ENCODE measurements at regions of chr11 and their contacts with region 1.

Region 1: GRCh38 chr11:16945671-16946469 is 68.3 kb downstream of the PLEKHA7 start:
- DNase-seq: peak; percentile 52 to 70 (median 62)
- ATAC-seq: peak; percentile 97
- H3K4me3 ChIP-seq: no peak overlapping the region
- H3K27ac ChIP-seq: no peak overlapping the region
- H3K4me1 ChIP-seq: no peaks in the 10 kb centered on the region
- H3K27me3 ChIP-seq: peaks cover 0 to 7% of the 10 kb centered on the region in 2 experiments; a peak in 2 of 5 replicates
- CTCF ChIP-seq: peak; percentile 76 to 85 (median 82)
- EP300 ChIP-seq: no peak
- POLR2A ChIP-seq: no peak
- RAD21 ChIP-seq: peak; percentile 89 to 93

Region 2: GRCh38 chr11:16881074-16881709 is 64.7 kb before region 1 on chr11:
- CTCF ChIA-PET with region 1: no interaction called
- POLR2A ChIA-PET with region 1: no interaction called
- in situ Hi-C with region 1: no loop called
- intact Hi-C with region 1: no loop called
- DNase-seq: peak; percentile 35 to 68 (median 56)
- ATAC-seq: peak; percentile 92
- H3K4me3 ChIP-seq: no peak overlapping the region
- H3K27ac ChIP-seq: no peak overlapping the region
- H3K4me1 ChIP-seq: peaks cover 0 to 6% of the 10 kb centered on the region in 2 experiments; a peak in 2 of 5 replicates
- H3K27me3 ChIP-seq: peaks cover 17 to 30% of the 10 kb centered on the region in 2 experiments
- CTCF ChIP-seq: peak; percentile 55 to 65 (median 60)
- EP300 ChIP-seq: no peak
- POLR2A ChIP-seq: no peak
- RAD21 ChIP-seq: peak; percentile 29 to 74; a peak in 3 of 4 replicates

Region 3: GRCh38 chr11:17063171-17064002 is 117.5 kb after region 1 on chr11:
- CTCF ChIA-PET with region 1: interaction called, 5 read pairs
- POLR2A ChIA-PET with region 1: interaction called, 4 read pairs
- in situ Hi-C with region 1: loop called (anchors 5 kb)
- intact Hi-C with region 1: loop called (anchors 1 kb)
- DNase-seq: peak; percentile 58 to 64 (median 60)
- ATAC-seq: peak; percentile 97
- H3K4me3 ChIP-seq: no peak overlapping the region
- H3K27ac ChIP-seq: no peak overlapping the region
- H3K4me1 ChIP-seq: no peaks in the 10 kb centered on the region
- H3K27me3 ChIP-seq: no peaks in the 10 kb centered on the region
- CTCF ChIP-seq: peak; percentile 70 to 80 (median 73)
- EP300 ChIP-seq: no peak
- POLR2A ChIP-seq: no peak
- RAD21 ChIP-seq: peak; percentile 78 to 91

Region 4: GRCh38 chr11:17207317-17208258 is 261.7 kb after region 1 on chr11 and contains the start of gene PIK3C2A:
- CTCF ChIA-PET with region 1: no interaction called
- POLR2A ChIA-PET with region 1: interaction called, 3 read pairs
- in situ Hi-C with region 1: loop called (anchors 10 kb)
- intact Hi-C with region 1: loop called (anchors 1 kb)
- DNase-seq: peak; percentile 92 to 97 (median 93)
- ATAC-seq: peak; percentile 96
- H3K4me3 ChIP-seq: peak within 1 kb of the TSS; percentile 87
- H3K27ac ChIP-seq: peak within 1 kb of the TSS; percentile 76
- H3K4me1 ChIP-seq: peaks cover 11 to 13% of the 10 kb centered on the region in 2 experiments; a peak in 4 of 5 replicates
- H3K27me3 ChIP-seq: no peaks in the 10 kb centered on the region
- CTCF ChIP-seq: no peak
- EP300 ChIP-seq: no peak
- POLR2A ChIP-seq: peak; percentile 93
- RAD21 ChIP-seq: no peak
- polyA plus RNA-seq, gene PIK3C2A: 3.1 to 4.1 TPM

Region 5: DNA sequence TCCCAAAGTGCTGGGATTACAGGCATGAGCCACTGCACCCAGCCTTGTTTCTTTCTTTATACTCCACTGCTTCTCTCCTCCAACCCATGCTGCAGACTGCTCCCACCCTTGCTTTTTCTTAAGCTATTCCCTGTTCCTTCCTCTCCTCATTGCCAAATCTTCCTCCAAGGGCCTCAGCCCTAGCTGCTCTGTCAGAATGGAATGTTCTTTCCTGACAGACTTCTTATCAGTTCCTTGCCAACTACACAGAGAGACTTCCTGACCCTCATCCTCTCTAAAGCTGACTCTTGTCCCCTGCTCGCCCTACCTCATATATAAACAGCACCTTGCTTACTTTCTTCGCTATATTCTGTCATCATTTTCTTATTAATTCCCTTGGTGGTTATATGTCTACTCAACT is 278.9 kb after region 1 on chr11:
- CTCF ChIA-PET with region 1: no interaction called
- POLR2A ChIA-PET with region 1: no interaction called
- in situ Hi-C with region 1: loop called (anchors 10 kb)
- intact Hi-C with region 1: loop called (anchors 5 kb)
- DNase-seq: no peak
- ATAC-seq: no peak; the same call in 2 of the 3 replicates
- H3K4me3 ChIP-seq: no peak overlapping the region
- H3K27ac ChIP-seq: no peak overlapping the region
- H3K4me1 ChIP-seq: no peaks in the 10 kb centered on the region
- H3K27me3 ChIP-seq: no peaks in the 10 kb centered on the region
- CTCF ChIP-seq: no peak
- EP300 ChIP-seq: no peak
- POLR2A ChIP-seq: no peak
- RAD21 ChIP-seq: no peak

Region 6: GRCh38 chr11:17389211-17389956 is 443.5 kb after region 1 on chr11:
- CTCF ChIA-PET with region 1: no interaction called
- POLR2A ChIA-PET with region 1: no interaction called
- in situ Hi-C with region 1: no loop called
- intact Hi-C with region 1: loop called (anchors 5 kb)
- DNase-seq: peak; percentile 76 to 96 (median 95)
- ATAC-seq: peak; percentile 74
- H3K4me3 ChIP-seq: peak overlapping the region; percentile 56
- H3K27ac ChIP-seq: no peak overlapping the region
- H3K4me1 ChIP-seq: peaks cover 2 to 36% of the 10 kb centered on the region in 2 experiments; a peak in 3 of 5 replicates
- H3K27me3 ChIP-seq: peaks cover 0 to 16% of the 10 kb centered on the region in 2 experiments
- CTCF ChIP-seq: peak; percentile 38 to 80 (median 63); a peak in 5 of 6 replicates
- EP300 ChIP-seq: no peak
- POLR2A ChIP-seq: no peak
- RAD21 ChIP-seq: peak; percentile 17 to 23; a peak in 2 of 4 replicates

Measured in K562 (cell line).